ENCODE measurements at regions of chr15 and their contacts with region 1.

Region 1: DNA sequence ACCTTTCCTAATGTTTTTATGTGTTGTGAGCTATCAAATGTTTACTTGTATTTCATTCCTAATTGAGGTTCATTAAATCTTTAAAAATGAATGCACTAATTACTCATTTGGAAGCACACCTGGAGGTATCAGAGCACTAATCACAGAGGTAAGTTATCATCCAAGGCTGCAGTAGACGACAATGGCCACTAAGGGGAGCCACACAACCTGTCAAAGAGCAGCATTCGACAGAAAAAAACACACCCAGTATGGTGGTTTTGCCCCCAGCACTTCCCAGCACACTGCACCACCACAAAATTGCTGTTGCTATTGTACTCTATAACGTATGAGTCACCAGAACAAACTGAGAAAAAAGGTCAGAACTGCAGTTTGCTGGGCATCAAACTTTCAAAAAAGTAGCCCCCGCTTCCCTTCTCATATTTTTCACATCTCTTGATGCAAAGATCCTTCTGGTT is 205.9 kb upstream of the IGF1R start:
- DNase-seq: peak; percentile 70 to 85 (median 70)
- ATAC-seq: peak; percentile 58
- H3K4me3 ChIP-seq: no peak overlapping the region
- H3K27ac ChIP-seq: no peak overlapping the region
- H3K4me1 ChIP-seq: no peaks in the 10 kb centered on the region
- H3K27me3 ChIP-seq: no peaks in the 10 kb centered on the region
- CTCF ChIP-seq: peak; percentile 51 to 85 (median 79)
- POLR2A ChIP-seq: no peak

Region 2: DNA sequence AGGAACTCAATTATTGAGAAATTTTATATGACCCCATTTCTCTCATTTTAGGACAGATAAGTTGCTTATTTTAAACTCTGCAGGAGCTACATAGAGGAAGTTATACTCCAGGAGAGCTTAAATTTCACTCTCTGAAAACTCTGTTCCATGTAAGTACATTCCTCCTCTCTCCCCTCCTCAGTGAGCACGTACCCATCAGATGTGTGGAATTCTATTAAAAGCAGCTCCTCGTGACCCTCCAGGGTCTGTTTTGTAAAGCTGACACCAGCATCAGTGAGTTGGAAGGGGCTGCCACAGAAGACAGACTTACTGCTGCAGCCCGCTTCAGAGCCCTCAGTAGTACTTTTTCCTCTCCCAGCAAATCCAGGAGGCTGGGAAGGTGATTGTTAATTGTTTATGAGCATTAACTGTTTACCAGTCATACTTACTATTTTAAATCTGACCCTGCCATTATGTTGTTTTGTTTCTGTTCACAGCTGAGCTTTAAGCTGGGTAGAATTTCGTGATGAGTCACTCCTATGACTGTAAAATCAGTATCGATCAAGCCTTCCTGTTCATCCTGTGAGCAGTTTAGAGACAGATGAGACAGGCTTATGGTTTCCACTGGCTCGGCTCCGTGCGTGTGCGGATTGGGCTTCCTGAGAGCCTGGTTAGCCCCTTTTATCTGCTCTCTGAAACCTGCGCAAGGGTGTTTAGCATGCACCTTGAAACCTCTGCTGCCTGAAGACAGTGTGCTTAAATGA is 226.3 kb after region 1 on chr15:
- intact Hi-C with region 1: loop called (anchors 10 kb)
- DNase-seq: no peak
- ATAC-seq: no peak
- H3K4me3 ChIP-seq: no peak overlapping the region
- H3K27ac ChIP-seq: peak overlapping the region in 3 of 4 donors; percentile 2 to 25 (median 6)
- H3K4me1 ChIP-seq: peaks cover 59% of the 10 kb centered on the region
- H3K27me3 ChIP-seq: no peaks in the 10 kb centered on the region
- CTCF ChIP-seq: no peak
- POLR2A ChIP-seq: no peak

Region 3: DNA sequence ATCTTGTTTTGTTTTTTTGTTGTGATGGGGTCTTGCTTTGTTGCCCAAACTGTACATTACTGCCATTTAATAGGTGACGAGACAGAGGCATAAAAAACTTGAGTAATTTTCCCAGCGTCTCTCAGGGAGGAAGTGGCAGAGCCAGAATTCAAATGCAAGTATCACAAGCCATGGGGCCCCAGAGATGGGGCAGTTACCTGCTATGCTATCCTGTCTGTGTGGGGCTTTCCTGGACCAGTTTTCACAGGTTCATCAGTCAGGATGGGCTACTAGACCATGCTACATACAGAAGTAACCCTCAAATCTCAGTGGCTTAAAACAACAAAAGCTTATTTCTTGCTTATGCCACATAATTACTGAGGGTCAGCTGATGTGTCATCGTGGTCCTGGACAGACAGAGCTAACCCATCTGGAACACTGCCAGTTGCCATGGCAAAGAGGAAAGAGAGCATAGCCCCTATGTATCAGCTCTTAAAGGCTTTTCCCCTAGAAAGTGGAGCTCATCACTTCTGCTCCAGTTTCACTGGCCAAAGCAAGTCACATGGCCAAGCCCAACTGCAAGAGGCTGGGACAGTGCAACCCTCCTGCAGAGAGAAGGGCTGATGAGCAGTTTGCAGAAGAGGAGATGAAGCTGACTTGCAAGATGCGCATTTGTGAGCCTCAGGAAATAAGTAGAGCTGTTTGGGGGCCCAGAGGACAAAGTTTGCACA is 630.8 kb after region 1 on chr15:
- intact Hi-C with region 1: loop called (anchors 5 kb)
- DNase-seq: no peak
- ATAC-seq: no peak
- H3K4me3 ChIP-seq: no peak overlapping the region
- H3K27ac ChIP-seq: no peak overlapping the region
- H3K4me1 ChIP-seq: peaks cover 4% of the 10 kb centered on the region
- H3K27me3 ChIP-seq: no peaks in the 10 kb centered on the region
- CTCF ChIP-seq: no peak
- POLR2A ChIP-seq: no peak

Measured in body of pancreas (tissue), 4 donors.